Sigmoid colon (tissue), 7 donors: ENCODE measurements at regions of chr1 and their contacts with region 1.

Region 1: DNA sequence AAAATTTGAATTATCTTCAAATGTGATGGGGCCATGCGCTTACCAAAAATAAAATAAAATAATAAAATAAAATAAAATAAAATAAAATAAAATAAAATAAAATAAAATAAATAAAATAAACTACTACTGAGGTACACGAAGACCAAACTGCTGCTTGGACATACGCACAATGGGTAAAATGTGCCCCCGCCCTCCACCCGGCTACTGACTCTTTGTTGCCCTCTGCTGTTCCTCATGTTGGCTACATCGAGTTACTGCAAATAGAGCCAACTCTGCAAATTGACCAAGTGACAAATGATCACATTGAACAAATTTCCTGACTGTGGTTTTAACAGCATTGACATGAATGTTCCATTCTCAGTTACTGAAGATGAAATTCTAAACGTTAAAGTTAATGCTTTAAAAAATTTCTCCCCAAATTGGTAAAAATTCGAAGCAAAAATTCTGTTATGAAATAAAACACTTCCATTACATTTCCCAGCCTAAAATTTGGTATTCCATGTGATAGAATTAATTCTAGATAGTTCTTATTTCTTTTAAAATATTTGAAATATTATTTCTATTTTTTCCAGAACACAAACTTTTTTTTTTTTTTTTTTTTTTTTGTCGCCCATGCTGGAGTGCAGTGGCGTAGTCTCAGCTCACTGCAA is 18.8 kb upstream of the MAP1LC3C start:
- DNase-seq: peak; percentile 71
- H3K4me3 ChIP-seq: no peak overlapping the region
- H3K27ac ChIP-seq: no peak overlapping the region
- H3K4me1 ChIP-seq: no peaks in the 10 kb centered on the region
- H3K27me3 ChIP-seq: no peaks in the 10 kb centered on the region
- CTCF ChIP-seq: peak in 2 of 4 experiments; percentile 5 to 53
- EP300 ChIP-seq: no peak
- POLR2A ChIP-seq: no peak

Region 2: GRCh38 chr1:241895013-241895412 is 122.7 kb before region 1 on chr1:
- intact Hi-C with region 1: loop called (anchors 10 kb)
- DNase-seq: no peak
- H3K4me3 ChIP-seq: no peak overlapping the region
- H3K27ac ChIP-seq: no peak overlapping the region
- H3K4me1 ChIP-seq: no peaks in the 10 kb centered on the region
- H3K27me3 ChIP-seq: no peaks in the 10 kb centered on the region
- CTCF ChIP-seq: no peak
- EP300 ChIP-seq: no peak
- POLR2A ChIP-seq: no peak

Region 3: DNA sequence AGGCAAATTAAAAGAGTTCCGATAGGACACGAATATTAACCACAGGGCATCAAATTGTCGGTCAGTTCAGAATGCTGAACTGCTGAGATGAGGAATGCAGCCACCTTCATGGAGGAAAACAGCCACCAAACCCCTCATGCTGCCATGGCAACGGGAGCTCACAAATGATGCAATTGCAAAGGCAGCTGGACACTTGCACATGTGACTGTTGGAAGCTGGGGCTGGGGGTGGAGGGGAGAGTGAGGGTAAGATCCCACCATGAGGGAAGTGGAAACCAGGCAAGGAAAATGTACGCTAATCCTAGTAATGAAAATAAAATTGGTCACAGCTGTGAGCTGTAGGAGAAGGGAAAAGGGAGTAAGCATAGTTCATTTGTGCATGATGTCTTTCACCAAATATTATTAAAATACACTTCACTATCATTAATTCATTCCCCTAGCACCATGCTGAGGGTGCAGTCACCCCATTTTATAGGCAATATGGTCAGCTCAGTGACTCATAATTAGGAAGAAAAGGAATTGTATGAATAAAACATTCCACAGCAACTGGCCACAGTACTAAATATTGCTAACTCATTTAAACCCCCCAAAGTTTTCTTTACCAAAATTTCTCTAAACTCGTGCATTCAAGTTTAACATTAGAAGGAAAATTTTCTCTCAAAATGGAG is 44.9 kb before region 1 on chr1:
- intact Hi-C with region 1: no loop called
- DNase-seq: no peak
- H3K4me3 ChIP-seq: no peak overlapping the region
- H3K27ac ChIP-seq: no peak overlapping the region
- H3K4me1 ChIP-seq: no peaks in the 10 kb centered on the region
- H3K27me3 ChIP-seq: no peaks in the 10 kb centered on the region
- CTCF ChIP-seq: no peak
- EP300 ChIP-seq: no peak
- POLR2A ChIP-seq: no peak